ENCODE measurements at regions of chr4 and their contacts with region 1.

Region 1: DNA sequence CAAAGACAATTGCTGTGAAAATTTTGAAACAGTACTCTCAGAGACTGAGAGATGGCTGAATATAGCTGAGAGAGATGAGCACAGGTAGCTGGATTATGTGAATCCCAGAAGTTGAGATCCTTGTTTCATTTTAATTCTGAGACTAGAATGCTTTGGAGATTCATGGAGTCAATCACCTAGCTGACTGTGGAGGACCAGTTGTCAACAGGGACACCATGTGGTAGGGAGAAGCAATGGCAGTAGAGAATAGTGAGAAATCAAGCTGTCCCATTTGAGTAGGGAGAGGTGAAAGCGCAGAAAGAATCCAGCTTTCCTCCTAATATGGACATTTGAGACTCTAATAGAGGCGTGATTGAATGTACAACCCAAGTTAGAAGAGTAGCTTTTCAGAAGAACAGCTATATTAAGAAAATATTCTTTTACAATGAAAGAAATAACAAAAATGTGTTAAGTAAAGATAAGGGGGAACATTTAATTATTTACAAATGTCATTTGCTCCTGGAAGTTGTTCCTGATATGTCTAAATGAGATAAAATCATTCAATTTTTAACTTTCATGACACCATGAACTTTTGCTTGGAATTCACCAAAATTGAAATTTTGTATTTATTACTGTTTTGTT is 30.3 kb upstream of the GLRB start:
- DNase-seq: no peak
- H3K4me3 ChIP-seq: no peak overlapping the region
- H3K27ac ChIP-seq: no peak overlapping the region
- H3K4me1 ChIP-seq: no peaks in the 10 kb centered on the region
- H3K27me3 ChIP-seq: no peaks in the 10 kb centered on the region
- CTCF ChIP-seq: peak; percentile 74 to 84 (median 77)
- EP300 ChIP-seq: no peak
- POLR2A ChIP-seq: no peak

Region 2: GRCh38 chr4:155953151-155954114 is 1092.2 kb before region 1 on chr4 and contains the start of gene CTSO:
- intact Hi-C with region 1: loop called (anchors 10 kb)
- DNase-seq: peak; percentile 93
- H3K4me3 ChIP-seq: peak within 1 kb of the TSS; percentile 67 to 81 (median 78)
- H3K27ac ChIP-seq: peak within 1 kb of the TSS; percentile 94 to 98 (median 96)
- H3K4me1 ChIP-seq: peaks cover 4 to 20% (median 14%) of the 10 kb centered on the region in 4 donors
- H3K27me3 ChIP-seq: no peaks in the 10 kb centered on the region
- CTCF ChIP-seq: peak; percentile 61 to 65 (median 62)
- EP300 ChIP-seq: no peak
- POLR2A ChIP-seq: peak; percentile 10
- total RNA-seq, gene CTSO: 18.8 to 22.8 (median 21.3) TPM

Region 3: GRCh38 chr4:156475322-156475721 is 570.3 kb before region 1 on chr4:
- intact Hi-C with region 1: loop called (anchors 5 kb)
- DNase-seq: no peak
- H3K4me3 ChIP-seq: no peak overlapping the region
- H3K27ac ChIP-seq: no peak overlapping the region
- H3K4me1 ChIP-seq: no peaks in the 10 kb centered on the region
- H3K27me3 ChIP-seq: no peaks in the 10 kb centered on the region
- CTCF ChIP-seq: peak; percentile 22 to 44 (median 37)
- EP300 ChIP-seq: no peak
- POLR2A ChIP-seq: no peak

Region 4: DNA sequence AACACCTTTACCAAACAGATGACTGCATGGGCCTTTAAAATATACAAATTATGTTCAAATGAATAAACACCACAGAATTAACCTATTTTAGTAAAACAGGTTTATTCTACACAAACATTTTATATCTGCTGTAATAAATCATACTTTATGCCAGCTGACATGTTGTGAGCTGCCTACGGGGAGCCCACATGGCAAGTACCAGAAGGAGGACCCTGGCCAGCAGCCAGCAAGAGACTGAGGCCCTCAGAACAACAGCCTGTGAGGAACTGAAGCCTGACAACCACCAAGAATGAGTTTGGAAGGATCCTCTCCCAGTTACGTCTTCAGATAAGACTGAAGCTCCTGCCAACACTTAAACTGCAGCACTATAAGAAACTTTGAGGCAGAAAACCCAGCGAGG is 451.0 kb before region 1 on chr4:
- intact Hi-C with region 1: loop called (anchors 2 kb)
- DNase-seq: no peak
- H3K4me3 ChIP-seq: no peak overlapping the region
- H3K27ac ChIP-seq: no peak overlapping the region
- H3K4me1 ChIP-seq: peaks cover 0 to 11% (median 6%) of the 10 kb centered on the region in 4 donors
- H3K27me3 ChIP-seq: no peaks in the 10 kb centered on the region
- CTCF ChIP-seq: no peak
- EP300 ChIP-seq: no peak
- POLR2A ChIP-seq: no peak

Region 5: DNA sequence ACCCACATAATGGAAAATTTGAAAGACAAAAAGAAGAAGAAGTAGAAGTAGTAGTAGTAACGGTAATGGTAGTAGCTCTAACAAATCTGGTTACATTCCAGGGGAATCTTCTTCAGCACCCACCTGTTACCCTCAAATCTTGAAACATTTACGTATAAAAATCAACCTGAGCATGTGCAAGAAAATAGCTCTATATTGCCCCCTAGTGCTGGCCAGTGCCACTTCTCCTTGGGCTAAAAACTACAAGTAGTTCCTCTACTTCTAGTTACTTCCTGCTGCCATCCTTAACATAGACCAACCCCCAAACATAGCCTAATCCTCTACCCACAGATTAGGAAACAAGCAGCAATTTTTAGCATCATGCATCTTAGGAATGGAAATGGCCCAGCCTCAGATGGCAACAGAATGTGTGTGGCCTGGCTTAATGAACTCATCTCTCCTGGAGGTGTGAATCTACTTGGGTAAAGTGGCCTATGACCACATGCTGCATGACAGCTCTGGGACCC is 77.1 kb before region 1 on chr4:
- intact Hi-C with region 1: loop called (anchors 5 kb)
- DNase-seq: no peak
- H3K4me3 ChIP-seq: peak overlapping the region; percentile 85 to 92 (median 88)
- H3K27ac ChIP-seq: peak overlapping the region; percentile 94 to 98 (median 96)
- H3K4me1 ChIP-seq: peaks cover 22 to 53% (median 46%) of the 10 kb centered on the region in 4 donors
- H3K27me3 ChIP-seq: no peaks in the 10 kb centered on the region
- CTCF ChIP-seq: peak; percentile 86 to 95 (median 86)
- EP300 ChIP-seq: no peak
- POLR2A ChIP-seq: no peak

Measured in esophagus muscularis mucosa (tissue), 4 donors.